Heart left ventricle (tissue), 16 donors: ENCODE measurements at regions of chr16 and their contacts with region 1.

Region 1: DNA sequence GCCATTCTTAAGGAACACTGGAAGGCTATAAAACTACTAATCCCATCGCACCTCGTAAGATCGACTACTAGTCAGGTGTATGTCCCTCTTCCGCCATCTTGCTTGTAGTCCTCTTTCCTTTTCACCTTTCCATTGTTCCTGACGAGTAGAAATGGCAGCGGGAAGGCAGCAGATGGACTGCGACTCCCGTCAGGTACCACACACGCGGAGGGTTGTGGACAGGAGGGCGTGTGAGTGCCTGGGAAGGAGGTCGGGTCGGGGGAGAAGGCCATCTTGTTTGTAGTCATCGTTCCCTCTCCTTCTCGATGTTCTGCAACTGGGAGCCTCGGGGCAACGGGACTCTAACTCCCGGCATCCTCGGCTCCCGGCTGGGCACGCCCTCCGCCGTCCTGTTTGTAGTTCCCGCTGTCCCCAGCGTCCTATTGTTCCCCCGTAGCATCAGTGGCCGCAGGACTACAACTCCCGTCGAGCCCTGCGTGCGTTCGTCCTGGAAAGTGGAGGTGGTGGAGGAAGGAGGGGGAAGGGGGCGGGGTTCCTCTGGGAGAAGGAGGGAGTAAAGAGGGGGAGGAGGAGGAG is 324 bp upstream of the FBXL19 start:
- DNase-seq: peak; percentile 99 to 100 (median 100)
- ATAC-seq: peak; percentile 80 to 86 (median 84)
- H3K4me3 ChIP-seq: peak overlapping the region; percentile 52 to 80 (median 66)
- H3K27ac ChIP-seq: peak overlapping the region; percentile 74 to 98 (median 94)
- H3K4me1 ChIP-seq: peaks cover 0 to 28% (median 9%) of the 10 kb centered on the region in 12 donors
- H3K27me3 ChIP-seq: no peaks in the 10 kb centered on the region
- CTCF ChIP-seq: no peak
- POLR2A ChIP-seq: peak in 1 of 2 donors; percentile 23

Region 2: GRCh38 chr16:30657866-30658730 is 264.9 kb before region 1 on chr16 and contains the start of gene FBRS:
- intact Hi-C with region 1: loop called in 2 of 10 experiments (anchors 1 to 5 kb)
- DNase-seq: peak; percentile 100
- ATAC-seq: peak; percentile 87 to 94 (median 92)
- H3K4me3 ChIP-seq: peak within 1 kb of the TSS; percentile 68 to 96 (median 90)
- H3K27ac ChIP-seq: peak within 1 kb of the TSS; percentile 96 to 100 (median 98)
- H3K4me1 ChIP-seq: peaks cover 0 to 47% (median 39%) of the 10 kb centered on the region in 12 donors
- H3K27me3 ChIP-seq: no peaks in the 10 kb centered on the region
- CTCF ChIP-seq: peak; percentile 74 to 99 (median 90)
- POLR2A ChIP-seq: peak in 1 of 2 donors; percentile 70
- total RNA-seq, gene FBRS: 16.3 to 38.3 (median 31.9) TPM

Region 3: DNA sequence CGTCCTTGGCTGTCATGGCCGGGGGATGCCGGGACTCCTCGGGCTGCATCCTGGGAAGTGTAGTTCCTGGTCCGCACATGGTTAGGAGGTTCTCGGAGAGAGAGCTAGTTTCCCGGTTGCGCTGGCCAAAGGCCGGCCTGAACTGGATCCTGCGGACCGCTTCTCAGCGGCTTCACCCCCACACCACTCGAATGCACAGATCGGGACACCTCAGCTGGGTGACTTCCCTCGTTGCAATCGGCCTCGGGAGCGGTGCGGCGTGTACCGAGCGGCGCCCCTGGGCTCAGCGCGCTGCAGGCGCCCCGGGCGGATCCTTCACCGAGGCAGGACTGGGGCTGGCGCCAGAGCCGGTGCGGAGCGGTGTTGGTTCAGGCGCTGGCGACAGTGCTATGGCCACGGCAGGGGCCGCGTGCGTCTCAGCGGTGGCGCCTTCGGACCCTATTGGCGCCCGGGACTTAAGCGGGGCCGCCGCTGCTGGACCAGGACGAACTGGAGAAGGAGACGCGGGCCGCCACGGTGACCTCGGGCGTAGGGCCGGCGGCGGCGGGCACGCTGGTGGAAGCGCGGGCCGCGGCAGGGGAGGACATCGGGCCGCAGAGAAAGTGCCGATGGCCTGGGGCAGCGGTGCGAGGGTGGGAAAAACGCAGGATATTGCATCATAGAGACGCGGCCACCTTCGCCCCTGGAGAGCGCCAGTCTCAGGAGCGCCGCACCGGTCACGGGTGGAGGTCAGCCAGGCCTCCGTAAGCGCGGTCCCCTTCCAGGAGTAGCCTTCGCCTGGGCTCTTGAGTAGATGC is 147.5 kb before region 1 on chr16:
- intact Hi-C with region 1: loop called in 1 of 10 experiments (anchors 1 kb)
- DNase-seq: peak; percentile 87 to 92 (median 89)
- ATAC-seq: peak; percentile 78 to 89 (median 86)
- H3K4me3 ChIP-seq: peak overlapping the region; percentile 61 to 93 (median 78)
- H3K27ac ChIP-seq: peak overlapping the region; percentile 67 to 99 (median 92)
- H3K4me1 ChIP-seq: peaks cover 0 to 41% (median 23%) of the 10 kb centered on the region in 12 donors
- H3K27me3 ChIP-seq: no peaks in the 10 kb centered on the region
- CTCF ChIP-seq: peak in 1 of 12 donors; percentile 6
- POLR2A ChIP-seq: peak in 1 of 2 donors; percentile 55

Region 4: GRCh38 chr16:30874821-30875717 is 48.0 kb before region 1 on chr16:
- intact Hi-C with region 1: loop called in 1 of 10 experiments (anchors 2 kb)
- DNase-seq: peak; percentile 92 to 96 (median 95)
- ATAC-seq: peak; percentile 97 to 99 (median 98)
- H3K4me3 ChIP-seq: peak overlapping the region; percentile 52 to 99 (median 87)
- H3K27ac ChIP-seq: peak overlapping the region; percentile 80 to 100 (median 94)
- H3K4me1 ChIP-seq: peaks cover 3 to 29% (median 20%) of the 10 kb centered on the region in 12 donors
- H3K27me3 ChIP-seq: no peaks in the 10 kb centered on the region
- CTCF ChIP-seq: peak in 1 of 12 donors; percentile 12
- POLR2A ChIP-seq: peak in 1 of 2 donors; percentile 86

Region 5: DNA sequence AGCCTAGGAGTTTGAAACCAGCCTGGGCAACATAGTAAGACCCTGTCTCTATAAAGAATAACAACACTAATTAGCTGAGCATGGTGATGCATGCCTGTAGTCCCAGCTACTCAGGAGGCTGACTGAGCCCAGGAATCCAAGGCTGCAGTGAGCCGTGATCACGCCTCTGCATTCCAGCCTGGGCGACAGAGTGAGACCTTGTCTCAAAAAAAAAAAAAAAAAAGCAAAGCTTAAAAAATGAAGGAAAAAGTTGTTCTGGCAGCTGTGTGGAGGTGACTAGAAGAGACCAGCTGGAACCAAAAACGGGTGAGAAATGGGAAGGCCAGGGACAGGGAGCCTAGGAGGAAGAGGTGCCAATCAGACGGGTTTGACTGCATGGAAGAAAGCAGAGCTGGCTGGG is 33.3 kb before region 1 on chr16:
- intact Hi-C with region 1: no loop called
- DNase-seq: no peak
- ATAC-seq: no peak
- H3K4me3 ChIP-seq: no peak overlapping the region
- H3K27ac ChIP-seq: no peak overlapping the region
- H3K4me1 ChIP-seq: peaks cover 0 to 20% (median 17%) of the 10 kb centered on the region in 12 donors
- H3K27me3 ChIP-seq: no peaks in the 10 kb centered on the region
- CTCF ChIP-seq: no peak
- POLR2A ChIP-seq: no peak

Region 6: GRCh38 chr16:30902029-30902972 is 20.7 kb before region 1 on chr16:
- intact Hi-C with region 1: loop called in 3 of 10 experiments (anchors 1 to 2 kb)
- DNase-seq: peak; percentile 74 to 92 (median 79)
- ATAC-seq: peak; percentile 38 to 93 (median 80)
- H3K4me3 ChIP-seq: peak overlapping the region; percentile 29 to 72 (median 62)
- H3K27ac ChIP-seq: peak overlapping the region; percentile 68 to 96 (median 92)
- H3K4me1 ChIP-seq: peaks cover 0 to 38% (median 22%) of the 10 kb centered on the region in 12 donors
- H3K27me3 ChIP-seq: no peaks in the 10 kb centered on the region
- CTCF ChIP-seq: peak in 10 of 12 donors; percentile 6 to 58 (median 24)
- POLR2A ChIP-seq: no peak